AG04450 (cell line): ENCODE measurements at regions of chr22 and their contacts with region 1.

Region 1: DNA sequence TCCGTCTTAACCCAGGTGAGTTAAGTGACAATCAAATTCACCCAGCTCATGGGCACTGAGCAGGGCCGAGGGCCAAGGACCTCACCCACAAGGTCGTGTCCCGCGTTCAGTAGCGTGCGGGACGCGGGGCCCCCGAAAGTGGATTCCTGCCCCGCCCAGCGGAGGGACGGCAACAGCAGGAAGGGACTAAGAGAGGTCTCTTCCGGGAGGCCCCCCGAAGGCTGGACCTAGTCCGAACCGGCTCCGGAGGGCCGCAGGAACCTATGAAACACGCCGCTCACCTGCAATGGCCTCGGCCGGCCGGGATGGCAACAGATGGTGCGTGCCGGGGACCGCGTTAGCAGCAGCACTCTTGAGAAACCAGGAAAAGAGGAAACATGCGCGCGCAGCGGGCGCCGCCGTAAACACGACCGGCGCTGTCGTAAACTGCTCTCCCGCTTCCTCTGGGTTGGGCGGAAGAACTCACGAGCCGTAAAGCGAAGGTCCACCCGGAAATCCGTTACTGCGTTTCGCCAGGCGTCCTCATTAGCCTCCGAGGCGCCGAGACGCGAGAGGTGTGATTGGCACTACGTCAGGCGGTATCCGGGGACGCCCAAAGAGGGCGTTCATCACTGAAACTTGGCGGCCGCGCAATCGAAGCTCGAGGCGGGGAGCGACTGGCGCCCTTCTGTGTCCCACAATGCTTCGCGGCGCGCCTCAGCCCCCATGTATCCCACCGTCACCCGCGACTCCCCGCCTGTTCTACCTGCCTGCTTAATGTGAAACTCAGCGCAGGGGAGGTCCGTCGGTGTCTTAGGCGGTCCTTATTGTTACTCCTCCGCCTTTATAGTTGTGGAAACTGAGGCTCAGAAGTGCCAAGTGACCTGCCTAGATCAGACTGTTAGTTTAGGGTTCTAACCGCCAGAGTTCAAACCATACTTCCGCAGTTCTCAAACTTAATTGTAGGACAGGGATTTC is at the start of gene EIF3D:
- DNase-seq: peak; percentile 98
- H3K4me3 ChIP-seq: peak within 1 kb of the TSS; percentile 91
- H3K27ac ChIP-seq: peak within 1 kb of the TSS; percentile 94
- H3K27me3 ChIP-seq: no peaks in the 10 kb centered on the region
- CTCF ChIP-seq: no peak
- polyA plus RNA-seq, gene EIF3D: 349 and 388 TPM in 2 replicates

Region 2: DNA sequence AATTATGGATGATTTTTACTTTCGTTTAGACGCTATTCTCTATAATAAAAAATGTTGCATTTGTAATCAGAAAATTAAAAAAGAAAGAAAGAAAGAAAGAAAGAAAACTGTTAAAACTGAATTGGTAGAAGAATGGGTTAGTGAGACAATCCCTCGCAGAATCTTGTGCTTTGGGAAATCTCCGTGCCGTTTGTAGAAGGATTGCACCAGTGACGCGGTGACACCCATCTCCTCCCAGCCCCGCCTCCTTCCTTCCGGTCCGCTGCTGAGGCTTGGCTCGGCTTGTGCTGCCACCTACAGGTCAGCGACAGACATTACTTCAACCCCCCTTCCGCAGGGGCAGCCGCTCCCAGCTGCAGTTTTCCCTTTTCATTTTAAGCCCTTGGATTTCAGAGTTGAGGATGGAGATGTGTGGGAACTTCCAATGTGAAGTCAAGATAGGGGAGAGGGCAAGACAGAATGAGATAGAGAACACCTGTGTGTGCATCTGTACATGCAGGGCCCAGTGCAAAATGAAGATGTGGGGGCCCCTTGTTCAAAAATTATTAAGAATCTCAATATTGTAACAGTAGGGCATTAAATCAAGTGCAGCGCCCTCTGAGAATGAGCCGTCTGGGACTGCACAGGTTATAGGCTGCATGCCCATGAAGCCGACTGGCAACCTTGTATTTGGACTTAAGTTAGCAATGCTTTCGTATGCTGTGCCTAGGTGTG is 449.0 kb after region 1 on chr22:
- CTCF ChIA-PET with region 1: interaction called, 10 read pairs
- POLR2A ChIA-PET with region 1: no interaction called
- DNase-seq: peak; percentile 49
- H3K4me3 ChIP-seq: peak overlapping the region; percentile 39
- H3K27ac ChIP-seq: no peak overlapping the region
- H3K27me3 ChIP-seq: peaks cover 12% of the 10 kb centered on the region
- CTCF ChIP-seq: peak; percentile 90